Thyroid gland (tissue), 4 donors: ENCODE measurements at regions of chr15 and their contacts with region 1.

Region 1: DNA sequence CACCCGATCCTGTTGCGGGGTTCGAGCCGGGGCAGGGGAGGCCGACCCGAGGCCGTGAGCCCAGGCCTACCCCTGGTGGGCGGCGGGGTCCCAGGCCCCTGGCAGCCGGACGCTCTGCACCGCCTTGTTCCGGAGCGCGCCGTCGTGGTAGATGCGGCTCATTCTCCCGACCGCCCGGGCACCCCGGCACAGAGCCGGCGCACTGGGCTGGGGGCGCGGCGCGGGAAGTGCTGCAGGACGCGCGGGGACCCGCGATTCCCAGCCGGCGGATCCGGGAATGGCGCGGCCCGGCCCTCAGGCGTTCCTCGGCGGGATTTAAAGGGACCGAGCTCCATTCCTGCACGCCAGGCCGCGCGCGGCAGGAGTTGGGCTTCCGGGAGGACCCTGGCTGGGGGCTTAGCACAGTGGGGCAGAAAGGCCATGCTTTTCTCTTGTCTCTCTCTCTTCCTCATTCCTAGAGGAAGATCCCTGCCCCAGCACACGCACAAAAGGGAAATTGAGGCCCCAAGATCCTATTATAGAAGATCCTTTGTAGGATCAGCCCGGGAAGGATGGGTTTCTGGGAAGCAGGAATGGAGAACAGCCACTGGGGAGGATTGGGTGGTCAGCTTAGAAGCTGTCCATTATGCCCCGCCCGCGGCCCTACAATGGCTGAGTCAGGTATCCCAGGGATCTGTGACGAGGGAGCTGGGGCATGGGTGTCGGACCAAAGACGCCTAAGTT is at the start of gene ARPIN:
- DNase-seq: peak; percentile 46 to 61
- H3K4me3 ChIP-seq: peak within 1 kb of the TSS; percentile 69 to 95 (median 80)
- H3K27ac ChIP-seq: peak within 1 kb of the TSS; percentile 37 to 78 (median 44)
- H3K4me1 ChIP-seq: peaks cover 4 to 27% of the 10 kb centered on the region in 2 donors
- H3K27me3 ChIP-seq: no peaks in the 10 kb centered on the region
- CTCF ChIP-seq: no peak
- POLR2A ChIP-seq: no peak
- total RNA-seq, gene ARPIN: 21.4 to 26.5 (median 24.1) TPM

Region 2: DNA sequence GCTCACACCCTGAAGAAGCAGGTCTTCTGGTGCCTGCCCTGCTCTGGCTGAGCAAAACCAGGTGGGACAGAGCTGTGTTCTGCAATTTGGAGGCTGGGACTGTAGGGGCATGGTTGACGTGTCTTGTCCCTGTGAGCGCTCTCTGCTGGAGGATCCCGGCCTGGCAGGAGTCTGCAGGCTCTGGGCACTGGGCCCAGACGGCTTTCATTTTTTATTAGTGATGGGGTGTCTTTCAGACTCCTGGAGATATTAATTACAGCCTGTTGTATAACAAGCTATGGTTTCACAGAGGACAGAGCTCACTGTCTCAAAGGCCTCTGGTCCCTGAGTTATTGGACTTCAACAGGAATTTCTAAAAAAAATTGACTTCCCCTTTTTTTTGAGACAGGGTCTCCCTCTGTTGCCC is 58.8 kb after region 1 on chr15:
- intact Hi-C with region 1: loop called (anchors 10 kb)
- DNase-seq: peak; percentile 48 to 59
- H3K4me3 ChIP-seq: no peak overlapping the region
- H3K27ac ChIP-seq: no peak overlapping the region
- H3K4me1 ChIP-seq: peaks cover 4 to 12% of the 10 kb centered on the region in 2 donors
- H3K27me3 ChIP-seq: no peaks in the 10 kb centered on the region
- CTCF ChIP-seq: peak in 4 of 6 experiments; percentile 14 to 53 (median 40)
- POLR2A ChIP-seq: no peak

Region 3: GRCh38 chr15:90249203-90249863 is 336.5 kb after region 1 on chr15 and contains the start of gene TTLL13:
- intact Hi-C with region 1: no loop called
- DNase-seq: peak; percentile 97 to 98
- H3K4me3 ChIP-seq: peak within 1 kb of the TSS in 2 of 3 donors; percentile 53 to 54
- H3K27ac ChIP-seq: peak within 1 kb of the TSS; percentile 35 to 68 (median 63)
- H3K4me1 ChIP-seq: peaks cover 8 to 10% of the 10 kb centered on the region in 2 donors
- H3K27me3 ChIP-seq: no peaks in the 10 kb centered on the region
- CTCF ChIP-seq: peak in 1 of 6 experiments; percentile 5
- POLR2A ChIP-seq: peak in 1 of 2 donors; percentile 83
- total RNA-seq, gene TTLL13: 0.13 to 0.22 TPM in 2 of 4 donors, not detected in the others